ENCODE measurements at regions of chr11 and their contacts with region 1.

Region 1: GRCh38 chr11:13169709-13170108 is 107.9 kb upstream of the BMAL1 start:
- DNase-seq: no peak
- H3K4me3 ChIP-seq: no peak overlapping the region
- H3K27ac ChIP-seq: no peak overlapping the region
- H3K4me1 ChIP-seq: no peaks in the 10 kb centered on the region; a peak in 2 of 7 replicates
- H3K27me3 ChIP-seq: no peaks in the 10 kb centered on the region
- CTCF ChIP-seq: no peak
- EP300 ChIP-seq: no peak
- POLR2A ChIP-seq: no peak
- RAD21 ChIP-seq: no peak

Region 2: DNA sequence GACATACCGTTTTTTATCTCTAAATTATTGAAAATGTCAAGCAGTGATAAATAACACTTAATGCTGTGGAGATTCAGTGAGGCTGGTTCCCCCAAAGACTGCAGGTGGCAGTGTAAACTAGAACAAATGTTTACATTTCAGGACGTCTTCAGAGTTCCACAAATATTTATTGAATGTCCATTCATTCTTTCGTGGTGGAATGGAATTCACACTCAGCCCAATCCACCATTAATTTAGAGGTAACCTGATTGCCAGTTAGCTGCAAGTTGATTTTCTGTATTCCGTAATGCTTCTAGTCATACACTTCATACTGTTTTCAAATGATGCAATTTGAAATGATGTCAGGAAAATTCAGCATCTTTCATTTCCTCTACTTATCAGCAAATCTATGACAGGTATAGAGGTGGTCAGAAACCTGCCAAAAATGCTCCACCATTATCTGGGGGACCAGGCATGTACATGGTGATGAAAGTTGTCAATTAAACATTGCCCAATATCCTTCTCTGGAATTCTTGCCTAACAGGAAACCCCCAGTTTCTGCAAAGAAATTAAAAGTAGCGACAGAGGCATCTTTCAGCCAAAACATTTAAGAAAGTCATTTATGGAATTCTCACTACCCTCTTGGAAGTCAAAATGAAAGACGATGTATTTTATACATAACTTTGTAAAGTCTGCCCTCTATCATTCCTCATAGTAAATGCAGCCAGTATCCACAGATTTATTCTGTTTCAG is 13.6 kb after region 1 on chr11:
- CTCF ChIA-PET with region 1: interaction called, 15 read pairs
- POLR2A ChIA-PET with region 1: no interaction called
- DNase-seq: no peak
- H3K4me3 ChIP-seq: no peak overlapping the region
- H3K27ac ChIP-seq: no peak overlapping the region
- H3K4me1 ChIP-seq: no peaks in the 10 kb centered on the region
- H3K27me3 ChIP-seq: no peaks in the 10 kb centered on the region
- CTCF ChIP-seq: peak in 2 of 3 experiments; percentile 20 to 45; a peak in 2 of 4 replicates
- EP300 ChIP-seq: no peak
- POLR2A ChIP-seq: no peak
- RAD21 ChIP-seq: peak; percentile 50 to 60

Measured in H1 (cell line).